ENCODE measurements at regions of chr12 and their contacts with region 1.

Region 1: DNA sequence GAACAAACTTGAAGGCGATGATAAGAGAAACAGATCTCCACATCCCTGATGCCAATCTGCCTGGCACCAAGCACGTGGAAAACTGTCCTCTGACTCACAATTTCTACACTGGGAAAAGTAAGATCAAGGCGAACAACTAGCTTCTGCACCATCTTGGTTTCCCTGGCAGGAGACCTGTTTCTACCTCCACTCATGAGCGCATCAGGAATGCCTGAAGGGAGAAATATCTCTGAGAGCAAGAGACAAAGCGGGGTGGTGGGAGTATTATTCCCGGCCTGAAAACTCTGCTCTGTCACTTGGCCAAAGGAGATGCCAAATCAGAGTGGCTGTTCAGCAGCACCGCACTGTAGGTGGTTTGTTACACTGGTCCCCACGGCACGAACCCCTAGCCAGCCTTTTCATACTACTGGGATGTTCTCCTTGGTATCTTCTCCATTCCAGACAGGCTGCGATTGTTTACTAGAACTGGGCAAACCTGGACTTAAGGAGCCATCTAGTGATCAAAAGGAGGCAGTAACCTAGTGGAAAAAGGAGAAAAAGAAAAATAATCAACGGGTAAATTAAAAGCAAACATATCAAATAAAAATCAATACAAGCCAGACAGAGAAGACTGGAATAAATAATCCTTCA is 59.0 kb upstream of the TMTC2 start:
- DNase-seq: peak; percentile 45
- H3K4me3 ChIP-seq: no peak overlapping the region
- H3K27ac ChIP-seq: no peak overlapping the region
- H3K4me1 ChIP-seq: no peaks in the 10 kb centered on the region
- H3K27me3 ChIP-seq: no peaks in the 10 kb centered on the region
- CTCF ChIP-seq: peak; percentile 59

Region 2: DNA sequence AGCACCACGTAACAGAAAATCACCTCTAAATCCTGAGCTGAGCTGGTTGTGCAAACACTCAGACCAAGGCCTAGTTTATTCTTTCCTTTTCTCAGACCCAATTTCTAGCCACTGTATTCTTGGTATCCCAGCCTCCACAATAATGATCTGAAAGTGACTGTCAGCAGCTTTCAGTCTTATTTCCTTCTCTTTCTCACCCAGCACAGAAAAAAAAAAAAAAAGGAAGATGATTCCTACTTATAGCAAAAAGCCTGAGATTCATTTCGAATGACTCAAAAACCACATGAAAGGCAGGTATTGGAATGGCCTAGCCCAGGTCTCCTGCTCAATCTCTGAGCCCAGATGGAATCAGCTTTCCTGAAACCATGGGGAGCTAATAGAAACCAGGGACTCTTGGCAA is 569.9 kb before region 1 on chr12:
- CTCF ChIA-PET with region 1: no interaction called
- POLR2A ChIA-PET with region 1: no interaction called
- intact Hi-C with region 1: no loop called
- DNase-seq: no peak
- H3K4me3 ChIP-seq: no peak overlapping the region
- H3K27ac ChIP-seq: no peak overlapping the region
- H3K4me1 ChIP-seq: no peaks in the 10 kb centered on the region
- H3K27me3 ChIP-seq: no peaks in the 10 kb centered on the region
- CTCF ChIP-seq: no peak

Region 3: GRCh38 chr12:82383930-82384552 is 243.6 kb before region 1 on chr12:
- CTCF ChIA-PET with region 1: no interaction called
- POLR2A ChIA-PET with region 1: no interaction called
- intact Hi-C with region 1: loop called (anchors 5 kb)
- DNase-seq: peak; percentile 33
- H3K4me3 ChIP-seq: no peak overlapping the region
- H3K27ac ChIP-seq: no peak overlapping the region
- H3K4me1 ChIP-seq: no peaks in the 10 kb centered on the region
- H3K27me3 ChIP-seq: no peaks in the 10 kb centered on the region
- CTCF ChIP-seq: peak; percentile 66

Region 4: DNA sequence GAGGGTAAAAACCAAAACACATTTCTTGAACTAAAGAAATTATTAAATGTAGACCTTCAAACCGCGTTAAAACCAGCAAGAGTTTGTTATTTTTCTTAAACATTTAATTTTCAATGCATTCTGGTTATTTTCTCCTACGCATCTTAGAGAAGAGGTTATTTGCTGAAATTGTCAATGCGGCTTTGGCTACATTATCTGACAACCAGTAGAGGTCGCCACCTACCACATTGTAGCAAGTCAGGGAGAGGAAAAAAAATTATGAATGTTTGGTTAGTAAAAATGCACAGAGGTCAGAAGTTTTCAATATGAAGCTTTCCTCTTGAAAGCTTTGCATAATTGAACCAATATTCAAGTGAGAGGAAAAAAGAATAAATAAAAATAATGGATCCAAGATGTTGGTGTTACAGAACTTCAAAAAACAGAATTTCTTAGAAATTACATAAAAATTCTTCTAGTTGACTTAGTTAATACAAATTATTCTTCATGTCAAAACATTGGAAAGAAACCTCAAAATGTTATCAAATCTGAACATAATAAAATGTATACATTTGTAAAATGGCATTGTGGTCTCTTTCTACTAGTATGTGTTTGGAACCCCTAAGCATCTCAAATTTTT is 100.4 kb before region 1 on chr12:
- CTCF ChIA-PET with region 1: no interaction called
- POLR2A ChIA-PET with region 1: no interaction called
- intact Hi-C with region 1: loop called (anchors 5 kb)
- DNase-seq: peak; percentile 61
- H3K4me3 ChIP-seq: no peak overlapping the region
- H3K27ac ChIP-seq: no peak overlapping the region
- H3K4me1 ChIP-seq: no peaks in the 10 kb centered on the region
- H3K27me3 ChIP-seq: peaks cover 8% of the 10 kb centered on the region
- CTCF ChIP-seq: peak; percentile 90

Region 5: DNA sequence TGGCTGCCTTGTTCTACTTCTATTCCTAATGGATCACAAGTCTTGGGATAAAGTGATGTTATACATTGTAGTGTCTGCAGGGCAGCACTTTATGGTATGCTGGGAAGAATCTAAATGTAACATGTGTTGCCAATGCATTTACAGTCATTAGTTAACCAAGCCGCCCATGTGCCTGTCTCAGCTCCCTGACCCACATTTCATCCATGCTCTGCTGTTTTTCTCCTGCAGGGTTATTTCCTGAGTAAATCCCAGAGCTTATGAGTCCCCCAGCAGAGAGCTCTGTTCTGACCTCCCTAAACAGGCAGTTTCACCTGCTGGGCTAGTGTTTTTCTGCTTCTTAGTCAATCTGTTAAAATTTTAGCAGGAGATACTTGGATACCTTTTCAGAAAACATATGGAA is 54.6 kb after region 1 on chr12:
- CTCF ChIA-PET with region 1: no interaction called
- POLR2A ChIA-PET with region 1: no interaction called
- intact Hi-C with region 1: no loop called
- DNase-seq: peak; percentile 20
- H3K4me3 ChIP-seq: no peak overlapping the region
- H3K27ac ChIP-seq: no peak overlapping the region
- H3K4me1 ChIP-seq: peaks cover 11% of the 10 kb centered on the region
- H3K27me3 ChIP-seq: no peaks in the 10 kb centered on the region
- CTCF ChIP-seq: no peak

Region 6: DNA sequence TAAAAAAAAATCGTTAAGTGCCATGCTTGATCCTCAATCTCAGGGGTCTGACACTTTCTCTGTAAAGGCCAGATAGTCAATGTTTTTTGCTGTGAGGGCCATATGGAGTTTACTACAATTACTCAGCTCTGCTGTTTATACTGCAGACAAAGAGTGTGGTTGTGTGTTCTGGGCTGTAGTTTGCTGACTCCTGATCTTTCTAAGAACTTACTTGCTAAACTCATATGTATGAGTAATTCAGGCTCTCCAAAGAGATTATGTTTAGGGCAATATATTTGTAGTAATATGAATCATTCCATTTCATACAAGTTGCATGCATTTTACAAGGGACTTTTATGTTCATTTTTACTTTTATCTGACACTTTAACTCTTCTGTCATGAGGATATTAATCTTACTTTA is 247.3 kb after region 1 on chr12:
- CTCF ChIA-PET with region 1: no interaction called
- POLR2A ChIA-PET with region 1: no interaction called
- intact Hi-C with region 1: no loop called
- DNase-seq: no peak
- H3K4me3 ChIP-seq: no peak overlapping the region
- H3K27ac ChIP-seq: no peak overlapping the region
- H3K4me1 ChIP-seq: peaks cover 21% of the 10 kb centered on the region
- H3K27me3 ChIP-seq: no peaks in the 10 kb centered on the region
- CTCF ChIP-seq: no peak